GM23248 (cell line): ENCODE measurements at regions of chr7 and their contacts with region 1.

Region 1: GRCh38 chr7:120987683-120988590 is 574 bp upstream of the CPED1 start:
- DNase-seq: peak; percentile 96
- H3K4me3 ChIP-seq: peak overlapping the region; percentile 78
- H3K27ac ChIP-seq: peak overlapping the region; percentile 71
- H3K4me1 ChIP-seq: peaks cover 34% of the 10 kb centered on the region
- H3K27me3 ChIP-seq: no peaks in the 10 kb centered on the region

Region 2: DNA sequence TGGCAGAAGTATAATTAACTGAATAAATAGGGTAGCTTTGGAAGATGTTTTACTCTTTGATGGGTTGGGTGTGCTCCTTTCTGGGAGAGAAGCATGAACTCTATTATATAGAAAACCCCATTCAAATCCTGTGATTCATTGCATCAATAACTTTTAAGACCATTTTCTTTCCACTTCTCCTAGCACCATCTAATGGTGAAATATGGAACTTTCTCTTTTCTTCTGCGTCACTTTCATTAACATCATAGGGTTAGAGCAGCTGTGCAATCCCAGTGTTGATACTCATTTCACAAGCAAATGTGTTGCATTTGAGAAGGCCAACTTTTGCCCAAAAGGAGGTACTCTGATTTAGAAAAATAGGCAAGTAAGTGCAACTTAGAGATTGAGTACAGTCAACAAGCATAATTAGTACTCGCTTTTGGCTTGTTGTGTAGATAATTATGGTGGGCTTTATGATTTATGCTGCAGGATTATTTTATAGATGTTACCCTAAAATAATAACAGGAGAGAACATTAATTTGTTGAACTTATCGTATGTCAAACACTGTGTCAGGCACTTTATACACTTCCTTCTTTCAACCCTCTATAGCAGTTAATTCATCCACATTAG is 93.5 kb after region 1 on chr7:
- in situ Hi-C with region 1: loop called (anchors 5 kb)
- DNase-seq: peak; percentile 83
- H3K4me3 ChIP-seq: no peak overlapping the region
- H3K27ac ChIP-seq: no peak overlapping the region
- H3K4me1 ChIP-seq: peaks cover 60% of the 10 kb centered on the region
- H3K27me3 ChIP-seq: no peaks in the 10 kb centered on the region

Region 3: DNA sequence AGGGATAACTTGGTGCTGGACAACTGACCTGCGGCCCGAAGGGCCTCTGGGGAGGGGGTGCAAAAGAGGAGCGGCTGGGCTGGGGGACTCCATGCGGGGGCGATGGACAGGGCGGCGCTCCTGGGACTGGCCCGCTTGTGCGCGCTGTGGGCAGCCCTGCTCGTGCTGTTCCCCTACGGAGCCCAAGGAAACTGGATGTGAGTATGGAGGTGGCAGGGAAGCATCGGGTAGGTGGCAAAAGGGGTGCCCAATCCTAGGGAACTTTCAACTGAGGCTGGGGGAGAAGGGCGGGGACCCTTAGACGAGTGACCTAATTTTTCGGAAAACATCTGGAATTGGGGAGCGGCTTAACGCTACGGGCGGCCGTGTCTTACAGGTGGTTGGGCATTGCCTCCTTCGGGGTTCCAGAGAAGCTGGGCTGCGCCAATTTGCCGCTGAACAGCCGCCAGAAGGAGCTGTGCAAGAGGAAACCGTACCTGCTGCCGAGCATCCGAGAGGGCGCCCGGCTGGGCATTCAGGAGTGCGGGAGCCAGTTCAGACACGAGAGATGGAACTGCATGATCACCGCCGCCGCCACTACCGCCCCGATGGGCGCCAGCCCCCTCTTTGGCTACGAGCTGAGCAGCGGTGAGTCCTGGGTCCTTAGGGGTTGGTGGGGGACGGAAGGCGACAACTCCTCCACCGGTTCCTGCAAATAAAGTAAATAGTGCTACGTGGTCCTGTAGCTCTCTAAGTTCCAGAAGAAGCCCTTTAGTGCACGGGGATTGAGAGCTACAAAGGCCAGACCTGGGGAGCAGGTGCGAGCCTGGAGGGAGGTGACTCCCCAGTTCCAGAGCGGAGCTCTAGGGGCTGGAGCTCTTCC is 341.5 kb after region 1 on chr7:
- in situ Hi-C with region 1: loop called (anchors 25 kb)
- DNase-seq: peak; percentile 26
- H3K4me3 ChIP-seq: peak overlapping the region; percentile 53
- H3K27ac ChIP-seq: no peak overlapping the region
- H3K4me1 ChIP-seq: 0 out of 2 replicates have a peak, but pooled peaks cover 5% of the 10 kb centered on the region
- H3K27me3 ChIP-seq: peaks cover 67% of the 10 kb centered on the region

Region 4: DNA sequence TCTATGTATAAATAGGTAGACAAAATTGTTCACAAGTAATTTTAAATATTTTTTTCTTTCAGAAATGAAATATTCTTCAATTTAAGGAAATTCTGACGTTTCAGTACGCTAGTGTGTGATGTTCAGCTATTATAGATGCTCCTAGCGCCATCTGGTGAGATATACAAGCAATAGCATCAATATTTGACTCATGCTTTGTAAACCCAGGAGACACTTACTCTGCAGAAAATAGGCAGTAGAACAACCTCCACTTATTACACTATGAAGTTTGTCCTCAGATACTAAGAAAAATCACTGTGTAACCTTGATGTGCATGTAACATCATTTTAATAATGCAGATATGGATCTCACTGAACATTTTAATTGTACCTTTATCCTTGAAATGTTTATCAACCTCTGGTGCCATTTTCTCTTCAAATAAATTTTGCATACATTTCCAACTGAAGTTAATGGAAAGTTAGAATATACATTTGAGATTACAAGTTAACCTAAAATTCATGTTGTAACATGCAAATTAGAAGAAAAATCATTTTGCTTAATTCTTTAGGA is 559.7 kb after region 1 on chr7:
- in situ Hi-C with region 1: loop called (anchors 25 kb)
- DNase-seq: peak; percentile 87
- H3K4me3 ChIP-seq: no peak overlapping the region
- H3K27ac ChIP-seq: no peak overlapping the region
- H3K4me1 ChIP-seq: peaks cover 15% of the 10 kb centered on the region; the same call in 1 of the 2 replicates
- H3K27me3 ChIP-seq: peaks cover 49% of the 10 kb centered on the region

Region 5: DNA sequence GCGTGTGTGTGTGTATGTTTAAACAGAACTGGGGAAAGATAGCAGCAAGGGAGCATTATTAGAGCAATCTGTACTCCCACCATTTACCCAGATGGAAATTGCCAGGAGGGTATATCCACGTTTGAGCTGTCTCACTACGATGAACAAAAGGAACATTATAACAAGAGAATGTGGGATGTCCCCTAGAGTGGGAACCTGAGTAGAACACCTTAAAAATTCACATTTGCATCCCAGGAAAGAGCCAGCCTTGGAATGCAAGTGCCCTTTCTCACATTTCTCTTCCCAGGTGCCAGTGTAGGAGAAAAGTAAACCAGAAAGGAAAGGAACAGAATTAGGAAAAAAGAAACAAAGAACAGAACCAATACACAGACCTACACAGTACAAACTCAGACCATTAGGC is 789.7 kb after region 1 on chr7:
- in situ Hi-C with region 1: no loop called
- DNase-seq: no peak
- H3K4me3 ChIP-seq: no peak overlapping the region
- H3K27ac ChIP-seq: no peak overlapping the region
- H3K4me1 ChIP-seq: no peaks in the 10 kb centered on the region
- H3K27me3 ChIP-seq: no peaks in the 10 kb centered on the region